Caco-2 (cell line): ENCODE measurements at regions of chr16 and their contacts with region 1.

Region 1: GRCh38 chr16:28491970-28492474 is at the start of gene CLN3:
- DNase-seq: peak; percentile 92 to 96
- H3K4me3 ChIP-seq: peak within 1 kb of the TSS; percentile 66
- H3K4me3 Mint-ChIP-seq: peak within 1 kb of the TSS; percentile 86
- H3K27ac Mint-ChIP-seq: peak within 1 kb of the TSS; percentile 98
- H3K4me1 ChIP-seq: no peaks in the 10 kb centered on the region
- H3K4me1 Mint-ChIP-seq: peaks cover 7% of the 10 kb centered on the region
- H3K27me3 ChIP-seq: no peaks in the 10 kb centered on the region
- H3K27me3 Mint-ChIP-seq: peaks cover 4% of the 10 kb centered on the region
- CTCF ChIP-seq: no peak
- total RNA-seq, gene CLN3: 41.0 and 42.2 TPM in 2 replicates

Region 2: DNA sequence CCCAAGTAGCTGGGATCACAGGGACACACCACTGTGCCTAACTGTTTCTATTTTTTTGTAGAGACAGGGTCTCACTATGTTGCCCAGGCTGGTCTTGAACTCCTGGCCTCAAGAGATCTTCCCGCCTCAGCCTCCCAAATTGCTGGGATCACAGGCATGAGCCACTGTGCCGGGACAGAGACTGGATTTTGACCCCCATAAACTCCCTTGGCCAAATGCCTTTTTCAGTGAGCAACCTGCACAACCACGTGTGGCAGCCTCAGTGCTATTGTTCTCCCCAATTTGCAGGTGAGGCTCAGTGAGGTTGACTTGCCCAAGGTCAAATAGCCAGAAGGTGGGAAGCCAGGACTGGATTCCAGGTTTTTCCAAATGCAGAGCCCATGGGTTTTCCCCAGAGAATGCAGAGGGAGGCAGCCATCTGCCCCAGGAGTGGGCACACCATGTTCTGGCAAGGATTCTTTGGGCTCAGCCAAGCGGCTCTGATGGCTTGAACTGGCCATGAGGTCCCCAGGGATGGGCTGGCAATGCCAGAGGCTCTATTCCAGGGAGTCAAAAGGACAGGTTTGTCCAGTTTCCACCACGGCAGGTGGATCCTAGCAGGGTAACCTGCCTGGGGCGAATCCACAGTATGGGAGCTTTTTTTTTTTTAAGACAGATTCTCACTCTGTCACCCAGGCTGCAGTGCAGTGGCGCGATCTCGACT is 12.8 kb after region 1 on chr16:
- CTCF ChIA-PET with region 1: interaction called, 3 read pairs
- POLR2A ChIA-PET with region 1: interaction called, 4 read pairs
- intact Hi-C with region 1: loop called (anchors 2 kb)
- DNase-seq: peak; percentile 63 to 71
- H3K4me3 ChIP-seq: no peak overlapping the region
- H3K4me3 Mint-ChIP-seq: no peak overlapping the region
- H3K27ac Mint-ChIP-seq: no peak overlapping the region
- H3K4me1 ChIP-seq: peaks cover 11% of the 10 kb centered on the region
- H3K4me1 Mint-ChIP-seq: no peaks in the 10 kb centered on the region
- H3K27me3 ChIP-seq: no peaks in the 10 kb centered on the region; the same call in 1 of the 2 replicates
- H3K27me3 Mint-ChIP-seq: no peaks in the 10 kb centered on the region
- CTCF ChIP-seq: no peak

Region 3: GRCh38 chr16:28526201-28527042 is 34.4 kb after region 1 on chr16:
- CTCF ChIA-PET with region 1: no interaction called
- POLR2A ChIA-PET with region 1: no interaction called
- intact Hi-C with region 1: loop called (anchors 2 kb)
- DNase-seq: peak; percentile 76 to 83
- H3K4me3 ChIP-seq: no peak overlapping the region
- H3K4me3 Mint-ChIP-seq: peak overlapping the region; percentile 43
- H3K27ac Mint-ChIP-seq: peak overlapping the region; percentile 74
- H3K4me1 ChIP-seq: peaks cover 46% of the 10 kb centered on the region
- H3K4me1 Mint-ChIP-seq: peaks cover 13% of the 10 kb centered on the region
- H3K27me3 ChIP-seq: no peaks in the 10 kb centered on the region
- H3K27me3 Mint-ChIP-seq: no peaks in the 10 kb centered on the region
- CTCF ChIP-seq: no peak

Region 4: DNA sequence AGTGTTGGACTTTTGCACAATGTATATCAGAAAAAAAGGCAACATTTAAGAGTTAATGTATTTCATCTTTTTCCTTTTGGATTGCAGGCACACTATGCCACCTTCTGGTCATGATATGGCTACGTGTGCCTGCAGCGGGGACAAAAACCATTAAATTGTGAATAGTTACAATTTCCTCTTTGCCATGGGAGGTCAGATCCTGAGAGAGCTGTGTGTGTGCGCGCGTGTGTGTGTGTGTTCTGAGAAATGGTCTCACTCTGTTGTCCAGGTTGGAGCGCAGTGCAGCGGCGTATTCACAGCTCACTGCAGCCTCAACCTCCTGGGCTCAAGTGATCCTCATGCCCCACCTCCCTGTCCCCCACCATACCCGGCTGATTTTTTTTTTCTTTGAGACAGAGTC is 57.4 kb after region 1 on chr16:
- CTCF ChIA-PET with region 1: no interaction called
- POLR2A ChIA-PET with region 1: interaction called, 4 read pairs
- intact Hi-C with region 1: loop called (anchors 1 kb)
- DNase-seq: peak in 1 of 2 experiments; percentile 39
- H3K4me3 ChIP-seq: no peak overlapping the region
- H3K4me3 Mint-ChIP-seq: no peak overlapping the region
- H3K27ac Mint-ChIP-seq: no peak overlapping the region
- H3K4me1 ChIP-seq: no peaks in the 10 kb centered on the region
- H3K4me1 Mint-ChIP-seq: peaks cover under 1% of the 10 kb centered on the region
- H3K27me3 ChIP-seq: no peaks in the 10 kb centered on the region
- H3K27me3 Mint-ChIP-seq: no peaks in the 10 kb centered on the region
- CTCF ChIP-seq: peak; percentile 60 to 67